OCI-LY7 (cell line): ENCODE measurements at regions of chr17 and their contacts with region 1.

Region 1: GRCh38 chr17:51685287-51685909 is 425.1 kb downstream of the UTP18 start:
- DNase-seq: no peak
- H3K4me3 ChIP-seq: no peak overlapping the region
- H3K27ac ChIP-seq: no peak overlapping the region
- H3K4me1 ChIP-seq: no peaks in the 10 kb centered on the region
- CTCF ChIP-seq: no peak

Region 2: GRCh38 chr17:51322390-51323029 is 362.9 kb before region 1 on chr17:
- CTCF ChIA-PET with region 1: no interaction called
- POLR2A ChIA-PET with region 1: no interaction called
- intact Hi-C with region 1: no loop called
- DNase-seq: peak; percentile 65
- H3K4me3 ChIP-seq: no peak overlapping the region
- H3K27ac ChIP-seq: no peak overlapping the region
- H3K4me1 ChIP-seq: no peaks in the 10 kb centered on the region
- CTCF ChIP-seq: peak; percentile 88

Region 3: DNA sequence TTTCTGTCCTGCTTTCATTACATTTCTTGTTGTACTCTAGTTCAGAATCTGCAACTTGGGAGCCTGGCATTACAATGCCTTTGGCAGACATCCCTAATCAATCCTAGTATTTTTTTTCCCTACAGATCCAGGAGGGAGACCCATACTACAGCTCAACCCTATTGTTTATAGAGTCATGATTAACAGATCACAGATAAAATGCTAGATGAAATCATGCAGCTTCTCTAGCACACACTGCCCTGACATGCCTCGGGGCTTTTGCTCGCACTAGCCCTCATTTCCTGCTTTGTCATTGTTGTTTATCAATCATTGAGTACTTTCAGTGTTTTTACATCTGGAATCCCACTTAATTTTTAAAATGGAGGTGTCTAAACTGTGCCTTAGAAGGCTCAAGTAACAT is 60.6 kb after region 1 on chr17:
- CTCF ChIA-PET with region 1: no interaction called
- POLR2A ChIA-PET with region 1: no interaction called
- intact Hi-C with region 1: loop called (anchors 10 kb)
- DNase-seq: no peak
- H3K4me3 ChIP-seq: no peak overlapping the region
- H3K27ac ChIP-seq: no peak overlapping the region
- H3K4me1 ChIP-seq: no peaks in the 10 kb centered on the region
- CTCF ChIP-seq: no peak